Activated B cell treated with CpG ODN at 0.5 μM for 24 hours (primary cell): ENCODE measurements at regions of chr6 and their contacts with region 1.

Region 1: DNA sequence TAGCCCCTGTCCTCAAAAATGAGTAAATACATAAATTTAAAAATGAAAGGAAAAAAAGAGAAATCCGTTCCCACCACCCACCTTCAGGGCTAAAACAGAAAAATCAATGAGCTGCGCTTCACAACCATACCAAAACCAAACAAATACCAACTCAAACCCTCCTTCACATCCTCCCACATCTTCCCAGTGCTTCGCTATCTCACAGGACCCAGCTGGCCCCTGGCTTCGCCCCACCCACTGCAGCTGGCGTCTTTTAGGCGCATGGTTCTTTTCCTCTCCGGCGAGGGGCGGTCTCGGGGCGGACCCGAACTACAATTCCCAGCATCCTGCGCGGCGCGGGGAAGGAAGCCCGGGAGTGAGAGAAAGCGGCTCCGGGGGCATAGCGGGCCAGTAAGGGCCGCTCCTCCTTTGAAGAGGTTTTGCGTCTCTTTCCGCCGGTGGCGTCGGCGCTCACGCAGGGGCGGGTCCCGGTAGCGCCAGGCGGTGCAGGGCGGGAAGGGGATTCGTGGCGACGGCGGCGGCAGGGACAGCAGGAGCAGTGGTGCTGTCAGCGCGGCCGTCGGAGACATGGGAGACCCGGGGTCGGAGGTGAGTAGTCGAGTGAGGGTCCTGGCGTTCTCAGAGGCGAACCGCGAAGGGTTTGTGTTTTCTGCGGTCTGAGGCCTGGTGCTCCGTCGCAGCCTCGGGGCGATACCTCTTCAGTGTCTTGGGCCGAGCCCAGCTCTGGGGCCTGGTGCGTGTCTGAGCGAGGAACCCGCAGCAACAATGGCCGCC is at the start of gene ZNF451:
- DNase-seq: peak; percentile 94
- ATAC-seq: peak; percentile 92
- H3K4me3 Mint-ChIP-seq: peak within 1 kb of the TSS; percentile 86
- H3K27ac Mint-ChIP-seq: peak within 1 kb of the TSS; percentile 87
- H3K4me1 Mint-ChIP-seq: peaks cover 31% of the 10 kb centered on the region
- H3K27me3 Mint-ChIP-seq: no peaks in the 10 kb centered on the region
- CTCF ChIP-seq: no peak
- total RNA-seq, gene ZNF451: 66.9 and 71.9 TPM in 2 replicates

Region 2: GRCh38 chr6:57172136-57173055 is 82.5 kb after region 1 on chr6 and contains the start of gene BAG2:
- CTCF ChIA-PET with region 1: no interaction called
- POLR2A ChIA-PET with region 1: interaction called, 9 read pairs
- intact Hi-C with region 1: loop called (anchors 1 kb)
- DNase-seq: peak; percentile 86
- ATAC-seq: peak; percentile 87
- H3K4me3 Mint-ChIP-seq: peak within 1 kb of the TSS; percentile 92
- H3K27ac Mint-ChIP-seq: peak within 1 kb of the TSS; percentile 92
- H3K4me1 Mint-ChIP-seq: peaks cover 26% of the 10 kb centered on the region
- H3K27me3 Mint-ChIP-seq: no peaks in the 10 kb centered on the region
- CTCF ChIP-seq: no peak
- total RNA-seq, gene BAG2: 3.9 and 4.3 TPM in 2 replicates

Region 3: DNA sequence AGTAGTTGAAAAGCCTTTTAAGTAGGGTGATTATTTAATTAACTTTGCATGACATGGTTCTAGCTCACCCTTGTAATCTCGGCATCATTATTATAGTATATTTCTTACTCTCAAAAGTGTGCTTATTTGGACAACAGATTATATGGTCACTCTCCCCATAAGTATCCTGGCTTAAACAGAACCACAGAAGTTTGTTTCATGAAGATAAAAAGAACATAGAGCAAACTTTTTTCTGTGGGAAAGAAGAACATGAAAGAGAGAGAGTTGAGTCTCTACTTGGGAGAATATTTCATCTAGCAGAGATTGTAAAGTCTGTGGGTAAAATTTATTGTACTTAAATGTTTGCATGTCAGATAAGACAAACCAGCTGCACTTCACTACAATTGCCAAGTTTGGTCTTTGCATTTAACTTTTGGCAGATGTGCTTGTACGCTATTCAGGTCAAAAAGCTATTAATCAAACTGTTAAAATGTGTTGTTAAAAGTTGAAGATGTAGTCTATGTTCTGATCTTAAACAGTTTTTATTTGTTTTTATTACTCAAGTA is 194.1 kb after region 1 on chr6:
- CTCF ChIA-PET with region 1: no interaction called
- POLR2A ChIA-PET with region 1: no interaction called
- intact Hi-C with region 1: no loop called
- DNase-seq: no peak
- ATAC-seq: no peak
- H3K4me3 Mint-ChIP-seq: no peak overlapping the region
- H3K27ac Mint-ChIP-seq: no peak overlapping the region
- H3K4me1 Mint-ChIP-seq: no peaks in the 10 kb centered on the region
- H3K27me3 Mint-ChIP-seq: peaks cover 13% of the 10 kb centered on the region
- CTCF ChIP-seq: no peak